Activated CD4-positive, alpha-beta T cell treated with anti-CD3 and anti-CD28 coated beads, Interleukin-2, amount 10 ng/mL, durations not matched to agents 24 days and 14 days (primary cell): ENCODE measurements at regions of chr9 and their contacts with region 1.

Region 1: DNA sequence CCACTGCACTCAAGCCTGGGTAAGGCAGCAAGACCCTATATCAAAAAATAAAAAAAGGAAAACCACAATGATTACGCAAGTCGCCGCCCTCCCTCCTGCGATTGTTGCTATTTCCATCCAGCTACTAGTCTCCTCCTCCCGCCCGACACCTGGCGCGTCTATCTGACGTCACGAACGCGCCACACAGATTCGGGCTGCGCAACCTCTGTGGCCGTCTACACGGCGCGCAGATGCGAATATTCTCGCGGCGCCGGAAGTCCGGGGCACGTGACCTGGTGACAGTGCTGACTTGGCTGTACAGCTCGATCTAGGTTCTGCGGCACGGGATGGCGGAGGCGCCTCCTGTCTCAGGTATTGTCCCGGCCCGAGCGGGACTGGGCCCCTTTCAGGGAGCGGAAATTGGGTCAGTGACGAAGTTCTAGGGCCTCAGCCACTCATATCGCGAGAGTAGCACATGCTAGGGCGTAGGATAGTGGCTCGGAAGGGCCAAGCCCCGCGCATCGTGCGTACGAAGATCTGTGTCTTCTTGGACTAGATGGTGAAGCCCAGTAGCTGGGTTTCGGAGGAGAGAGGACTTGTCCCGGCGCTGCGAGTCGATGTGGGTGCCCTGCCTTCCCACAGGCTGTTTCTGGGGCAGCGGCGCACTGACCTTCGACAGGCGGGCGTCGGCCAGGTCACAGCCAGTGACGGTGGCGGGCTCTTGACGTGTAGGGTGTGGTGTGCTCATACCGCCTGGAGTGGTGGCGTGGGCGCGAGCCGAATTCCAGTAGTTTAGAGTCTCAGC is at the start of gene NFX1:
- DNase-seq: peak; percentile 100
- H3K4me3 Mint-ChIP-seq: peak within 1 kb of the TSS; percentile 99
- H3K27ac Mint-ChIP-seq: peak within 1 kb of the TSS; percentile 100
- H3K4me1 Mint-ChIP-seq: peaks cover 53% of the 10 kb centered on the region
- H3K27me3 Mint-ChIP-seq: peaks cover 3% of the 10 kb centered on the region
- total RNA-seq, gene NFX1: 37.2 and 38.7 TPM in 2 replicates

Region 2: DNA sequence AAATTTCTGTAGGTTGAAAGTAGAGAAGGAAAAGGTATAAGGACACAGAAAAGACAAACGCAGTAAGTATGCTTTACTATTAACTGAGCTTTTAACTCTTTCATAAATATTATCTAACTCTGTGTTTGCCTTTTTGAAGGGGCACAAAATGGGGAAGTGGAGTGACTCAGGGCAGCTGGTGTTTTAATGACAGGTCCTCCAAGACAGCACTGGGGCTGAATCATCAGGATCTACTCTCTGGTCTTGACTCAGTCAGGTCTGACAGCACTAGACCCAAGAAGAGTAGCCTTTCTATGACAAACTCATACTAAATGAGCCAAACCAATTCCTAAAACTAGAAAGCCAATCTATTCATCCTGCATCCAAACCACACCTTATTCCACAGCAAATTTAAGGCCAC is 391.3 kb before region 1 on chr9:
- intact Hi-C with region 1: no loop called
- DNase-seq: no peak
- H3K4me3 Mint-ChIP-seq: no peak overlapping the region
- H3K27ac Mint-ChIP-seq: no peak overlapping the region
- H3K4me1 Mint-ChIP-seq: no peaks in the 10 kb centered on the region
- H3K27me3 Mint-ChIP-seq: peaks cover 20% of the 10 kb centered on the region

Region 3: GRCh38 chr9:33076358-33077004 is 214.0 kb before region 1 on chr9 and contains the start of gene SMU1:
- intact Hi-C with region 1: loop called (anchors 1 kb)
- DNase-seq: peak; percentile 99
- H3K4me3 Mint-ChIP-seq: peak within 1 kb of the TSS; percentile 98
- H3K27ac Mint-ChIP-seq: peak within 1 kb of the TSS; percentile 97
- H3K4me1 Mint-ChIP-seq: peaks cover 19% of the 10 kb centered on the region
- H3K27me3 Mint-ChIP-seq: no peaks in the 10 kb centered on the region
- total RNA-seq, gene SMU1: 28.6 and 30.2 TPM in 2 replicates

Region 4: GRCh38 chr9:33306037-33306436 is 15.6 kb after region 1 on chr9:
- intact Hi-C with region 1: loop called (anchors 1 kb)
- DNase-seq: peak; percentile 81
- H3K4me3 Mint-ChIP-seq: no peak overlapping the region
- H3K27ac Mint-ChIP-seq: no peak overlapping the region
- H3K4me1 Mint-ChIP-seq: peaks cover 15% of the 10 kb centered on the region
- H3K27me3 Mint-ChIP-seq: no peaks in the 10 kb centered on the region

Region 5: DNA sequence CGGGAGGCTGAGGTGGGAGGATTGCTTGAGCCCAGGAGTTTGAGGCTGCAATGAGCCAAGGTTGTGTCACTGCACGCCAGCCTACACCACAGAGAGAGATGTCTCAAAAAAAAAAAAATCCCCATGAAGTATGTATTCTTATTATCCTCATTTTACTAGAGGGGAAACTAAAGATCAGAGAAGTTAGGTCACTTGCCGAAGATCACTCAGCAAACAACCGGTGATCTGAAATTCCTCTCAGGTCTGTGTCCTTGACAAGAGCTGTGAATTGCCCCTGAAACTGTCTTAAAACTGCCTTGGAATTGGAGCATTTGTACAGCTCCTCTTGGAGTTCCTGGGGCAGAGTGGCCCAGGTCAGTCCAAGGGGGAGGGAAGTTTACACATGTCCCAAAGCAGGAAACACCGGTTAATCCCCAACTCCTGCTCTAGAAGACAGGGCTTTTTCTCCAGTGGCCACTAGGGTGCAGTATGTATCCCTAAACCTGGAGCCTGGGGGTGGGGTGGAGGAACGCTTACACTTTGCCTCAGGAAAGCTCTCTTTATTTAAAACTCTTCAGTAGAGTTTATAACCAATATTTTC is 84.3 kb after region 1 on chr9:
- intact Hi-C with region 1: loop called (anchors 1 kb)
- DNase-seq: peak; percentile 91
- H3K4me3 Mint-ChIP-seq: peak overlapping the region; percentile 30
- H3K27ac Mint-ChIP-seq: peak overlapping the region; percentile 52
- H3K4me1 Mint-ChIP-seq: peaks cover 10% of the 10 kb centered on the region
- H3K27me3 Mint-ChIP-seq: no peaks in the 10 kb centered on the region

Region 6: GRCh38 chr9:33466565-33467495 is 176.4 kb after region 1 on chr9:
- intact Hi-C with region 1: loop called (anchors 2 kb)
- DNase-seq: peak; percentile 94
- H3K4me3 Mint-ChIP-seq: no peak overlapping the region
- H3K27ac Mint-ChIP-seq: no peak overlapping the region
- H3K4me1 Mint-ChIP-seq: peaks cover 6% of the 10 kb centered on the region
- H3K27me3 Mint-ChIP-seq: no peaks in the 10 kb centered on the region

Region 7: DNA sequence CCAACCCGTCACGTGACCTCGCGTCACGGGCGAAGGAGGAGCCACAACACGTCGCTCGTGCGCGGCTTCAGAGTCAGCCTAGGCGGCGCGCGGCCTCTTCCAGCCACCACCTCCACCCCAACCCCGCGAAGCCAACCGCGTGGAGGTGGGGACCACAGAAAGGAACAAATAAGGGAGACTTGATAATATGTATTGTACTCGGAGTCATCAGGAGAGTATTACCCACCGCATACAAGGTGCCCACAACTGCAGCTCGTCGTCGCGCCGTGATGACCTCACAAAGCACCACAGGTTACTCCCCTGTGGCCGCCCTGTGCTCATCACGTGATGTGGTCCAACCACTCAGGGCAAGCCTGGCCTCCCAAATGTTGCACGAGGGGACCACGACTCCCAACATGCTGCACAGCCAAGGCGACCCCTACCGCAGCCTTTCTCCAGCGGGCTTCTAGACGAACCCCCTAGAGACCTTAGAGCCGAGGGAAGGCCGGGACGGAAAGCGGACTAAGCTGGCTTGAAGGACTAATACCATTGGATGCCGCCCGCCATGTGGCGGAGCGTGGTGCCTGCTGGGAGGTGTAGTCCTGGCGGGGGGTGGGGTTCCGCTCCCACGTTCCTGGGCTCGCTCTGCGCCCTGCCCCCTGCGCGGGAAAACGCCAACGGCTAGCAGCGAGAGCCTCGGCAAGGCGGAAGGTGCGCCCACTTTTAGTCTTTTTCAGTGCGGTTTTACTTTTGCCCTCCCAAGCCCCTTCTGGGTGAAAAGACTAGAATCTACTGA is 758.7 kb after region 1 on chr9:
- intact Hi-C with region 1: loop called (anchors 1 kb)
- DNase-seq: peak; percentile 99
- H3K4me3 Mint-ChIP-seq: peak overlapping the region; percentile 96
- H3K27ac Mint-ChIP-seq: peak overlapping the region; percentile 99
- H3K4me1 Mint-ChIP-seq: peaks cover 41% of the 10 kb centered on the region
- H3K27me3 Mint-ChIP-seq: peaks cover 3% of the 10 kb centered on the region